Endothelial cell of umbilical vein (primary cell): ENCODE measurements at regions of chr2 and their contacts with region 1.

Region 1: GRCh38 chr2:238370823-238371372 is 50.6 kb downstream of the TRAF3IP1 start:
- DNase-seq: peak; percentile 55
- H3K4me3 ChIP-seq: no peak overlapping the region
- H3K27ac ChIP-seq: no peak overlapping the region
- H3K4me1 ChIP-seq: no peaks in the 10 kb centered on the region
- H3K27me3 ChIP-seq: no peaks in the 10 kb centered on the region
- CTCF ChIP-seq: peak; percentile 77 to 78
- POLR2A ChIP-seq: no peak

Region 2: DNA sequence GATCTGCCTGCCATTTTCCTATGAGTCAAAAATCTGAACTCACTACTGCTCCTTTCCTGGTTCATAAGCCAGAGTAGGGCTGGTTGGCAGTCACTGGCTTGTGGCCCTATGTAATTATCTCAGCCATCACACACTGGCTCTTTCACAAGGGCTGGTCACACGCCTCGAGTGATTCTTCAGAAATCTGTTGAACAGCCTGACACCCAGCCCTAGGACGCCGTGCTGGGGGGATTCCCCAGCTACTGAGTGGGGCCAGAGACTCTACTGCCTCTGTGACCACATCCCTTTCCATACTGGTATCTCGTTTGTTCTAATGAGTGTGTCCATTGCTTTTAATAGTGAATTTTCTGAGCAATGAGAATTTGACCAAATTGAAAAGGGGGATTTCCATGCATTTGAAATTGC is 618.1 kb before region 1 on chr2:
- CTCF ChIA-PET with region 1: no interaction called
- POLR2A ChIA-PET with region 1: no interaction called
- dilution Hi-C with region 1: no loop called
- intact Hi-C with region 1: no loop called
- DNase-seq: no peak
- H3K4me3 ChIP-seq: no peak overlapping the region
- H3K27ac ChIP-seq: no peak overlapping the region
- H3K4me1 ChIP-seq: no peaks in the 10 kb centered on the region
- H3K27me3 ChIP-seq: no peaks in the 10 kb centered on the region
- CTCF ChIP-seq: no peak
- POLR2A ChIP-seq: no peak

Region 3: GRCh38 chr2:238433941-238434845 is 63.3 kb after region 1 on chr2:
- CTCF ChIA-PET with region 1: interaction called, 18 read pairs
- POLR2A ChIA-PET with region 1: no interaction called
- dilution Hi-C with region 1: no loop called
- intact Hi-C with region 1: no loop called
- DNase-seq: no peak
- H3K4me3 ChIP-seq: no peak overlapping the region
- H3K27ac ChIP-seq: peak overlapping the region; percentile 8
- H3K4me1 ChIP-seq: no peaks in the 10 kb centered on the region
- H3K27me3 ChIP-seq: no peaks in the 10 kb centered on the region
- CTCF ChIP-seq: no peak
- POLR2A ChIP-seq: no peak